ENCODE measurements at regions of chr10 and their contacts with region 1.

Region 1: DNA sequence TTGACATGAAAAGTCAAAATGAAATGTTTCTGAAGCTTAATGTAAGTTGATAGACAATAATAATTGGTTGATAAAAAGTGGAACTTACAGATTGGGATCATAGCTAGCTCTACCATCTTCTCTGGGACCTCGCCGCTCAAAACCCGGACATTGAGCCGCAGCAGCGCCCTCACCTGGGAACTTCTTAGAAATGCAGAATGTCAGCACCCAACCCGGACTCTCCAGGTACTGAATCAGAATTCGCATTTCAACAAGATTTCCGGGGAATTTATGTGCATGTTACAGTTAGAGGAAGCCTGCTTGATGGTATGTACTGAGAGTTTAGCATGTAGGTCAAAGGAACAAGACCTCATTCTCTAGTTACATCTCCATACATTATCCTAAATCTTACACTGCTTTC is 36.7 kb upstream of the ABLIM1 start:
- DNase-seq: peak; percentile 61
- ATAC-seq: peak; percentile 97
- H3K4me3 ChIP-seq: no peak overlapping the region
- H3K27ac ChIP-seq: no peak overlapping the region
- H3K4me1 ChIP-seq: peaks cover 16 to 18% of the 10 kb centered on the region in 2 experiments; a peak in 3 of 4 replicates
- H3K27me3 ChIP-seq: no peaks in the 10 kb centered on the region
- CTCF ChIP-seq: peak; percentile 86 to 97 (median 93)
- POLR2A ChIP-seq: no peak
- RAD21 ChIP-seq: peak; percentile 91

Region 2: DNA sequence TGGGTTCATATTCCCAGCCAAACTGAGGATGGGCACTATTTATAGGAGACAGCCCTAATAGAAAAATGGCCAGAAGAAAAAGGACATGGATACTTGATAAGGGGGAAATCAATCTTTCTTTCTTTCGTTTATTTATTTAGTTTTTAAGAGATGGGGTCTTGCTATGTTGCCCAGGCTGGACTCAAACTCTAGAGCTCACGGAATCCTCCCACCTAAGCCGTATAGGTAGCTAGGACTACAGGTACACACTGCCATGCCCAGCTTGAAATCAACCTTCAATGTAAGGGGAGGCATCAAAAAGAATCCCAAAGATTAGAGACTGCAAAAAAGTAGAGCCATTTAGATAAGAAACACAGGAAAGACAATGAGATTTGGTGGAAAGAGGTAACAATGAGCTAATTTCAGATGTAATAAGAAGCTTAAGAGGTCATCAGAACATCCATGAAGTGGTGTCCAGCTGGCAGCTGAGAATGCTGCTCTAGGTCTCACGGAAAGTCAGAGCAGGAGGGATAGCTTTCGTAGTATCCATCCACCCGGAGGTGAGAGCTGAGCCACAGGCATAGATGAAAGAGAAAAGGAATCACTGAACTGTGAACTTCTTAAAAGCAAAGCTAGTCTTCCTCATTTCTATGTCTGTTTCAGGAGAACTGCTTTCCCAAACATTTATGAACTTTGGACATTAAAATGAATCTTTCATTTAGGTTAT is 26.2 kb before region 1 on chr10:
- CTCF ChIA-PET with region 1: no interaction called
- POLR2A ChIA-PET with region 1: no interaction called
- RAD21 ChIA-PET with region 1: no interaction called
- intact Hi-C with region 1: no loop called
- DNase-seq: no peak
- ATAC-seq: no peak
- H3K4me3 ChIP-seq: no peak overlapping the region
- H3K27ac ChIP-seq: no peak overlapping the region
- H3K4me1 ChIP-seq: no peaks in the 10 kb centered on the region
- H3K27me3 ChIP-seq: peaks cover 3% of the 10 kb centered on the region; the same call in 1 of the 2 replicates
- CTCF ChIP-seq: no peak
- POLR2A ChIP-seq: no peak
- RAD21 ChIP-seq: no peak

Region 3: DNA sequence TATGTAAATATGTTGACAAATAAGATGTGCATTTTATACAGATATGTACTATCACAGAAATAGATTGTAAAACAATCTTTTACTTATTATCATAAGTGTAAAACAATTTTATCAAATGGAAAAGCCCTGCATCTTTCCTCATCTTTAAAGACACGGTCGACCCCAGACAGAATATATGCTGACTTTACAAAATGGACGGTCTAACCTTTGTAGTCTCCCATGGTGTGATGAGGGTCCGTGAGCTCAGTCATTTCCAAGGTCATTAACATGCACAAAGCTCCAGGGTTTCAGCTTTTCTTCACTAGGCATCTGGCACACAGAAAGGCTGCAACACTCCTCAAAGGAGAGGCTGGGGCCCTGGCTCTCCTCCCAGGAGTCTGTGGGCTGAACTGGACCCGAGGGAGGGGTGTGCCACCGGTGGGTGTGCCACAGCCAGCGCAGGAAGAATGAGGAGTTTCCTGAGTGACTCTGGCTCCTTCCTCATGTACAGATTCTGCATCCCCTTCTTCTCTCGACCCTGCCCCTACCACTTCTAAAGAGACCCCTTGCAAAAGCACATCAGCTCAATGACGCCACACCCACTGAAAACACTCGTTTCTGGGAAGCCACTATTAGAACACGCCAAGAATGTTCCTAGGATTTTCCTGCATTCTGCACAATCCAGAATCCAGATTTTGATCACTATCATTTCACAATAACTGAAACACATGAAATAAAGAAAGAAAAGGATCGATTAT is 10.5 kb before region 1 on chr10:
- CTCF ChIA-PET with region 1: interaction called, 12 read pairs
- POLR2A ChIA-PET with region 1: interaction called, 3 read pairs
- RAD21 ChIA-PET with region 1: no interaction called
- intact Hi-C with region 1: no loop called
- DNase-seq: no peak
- ATAC-seq: 0 out of 2 replicates have a peak, but pooled peaks have one; percentile 35
- H3K4me3 ChIP-seq: 0 out of 4 replicates have a peak overlapping the region, but pooled peaks of 1 of the 2 experiments have one; percentile 4
- H3K27ac ChIP-seq: no peak overlapping the region; the same call in 1 of the 2 replicates
- H3K4me1 ChIP-seq: peaks cover 29 to 35% of the 10 kb centered on the region in 2 experiments
- H3K27me3 ChIP-seq: no peaks in the 10 kb centered on the region
- CTCF ChIP-seq: no peak
- POLR2A ChIP-seq: no peak
- RAD21 ChIP-seq: no peak

Measured in HCT116 (cell line).